ENCODE measurements at regions of chr4 and their contacts with region 1.

Region 1: GRCh38 chr4:123127218-123127617 is 204.8 kb upstream of the NUDT6 start:
- DNase-seq: peak; percentile 48
- H3K4me3 ChIP-seq: no peak overlapping the region
- H3K27ac ChIP-seq: no peak overlapping the region
- H3K4me1 ChIP-seq: peaks cover 10% of the 10 kb centered on the region
- H3K27me3 ChIP-seq: no peaks in the 10 kb centered on the region

Region 2: GRCh38 chr4:123649645-123650391 is 522.6 kb after region 1 on chr4:
- in situ Hi-C with region 1: loop called (anchors 25 kb)
- DNase-seq: peak; percentile 76
- H3K4me3 ChIP-seq: peak overlapping the region; percentile 11
- H3K27ac ChIP-seq: peak overlapping the region; percentile 47
- H3K4me1 ChIP-seq: peaks cover 17% of the 10 kb centered on the region
- H3K27me3 ChIP-seq: no peaks in the 10 kb centered on the region

Region 3: GRCh38 chr4:123706973-123707372 is 579.8 kb after region 1 on chr4:
- in situ Hi-C with region 1: no loop called
- DNase-seq: peak; percentile 26
- H3K4me3 ChIP-seq: no peak overlapping the region
- H3K27ac ChIP-seq: no peak overlapping the region
- H3K4me1 ChIP-seq: peaks cover 13% of the 10 kb centered on the region
- H3K27me3 ChIP-seq: no peaks in the 10 kb centered on the region

Region 4: GRCh38 chr4:124111922-124112321 is 984.7 kb after region 1 on chr4:
- in situ Hi-C with region 1: loop called (anchors 25 kb)
- DNase-seq: peak; percentile 77
- H3K4me3 ChIP-seq: no peak overlapping the region
- H3K27ac ChIP-seq: no peak overlapping the region
- H3K4me1 ChIP-seq: peaks cover 4% of the 10 kb centered on the region
- H3K27me3 ChIP-seq: no peaks in the 10 kb centered on the region